ENCODE measurements at regions of chr2 and their contacts with region 1.

Region 1: DNA sequence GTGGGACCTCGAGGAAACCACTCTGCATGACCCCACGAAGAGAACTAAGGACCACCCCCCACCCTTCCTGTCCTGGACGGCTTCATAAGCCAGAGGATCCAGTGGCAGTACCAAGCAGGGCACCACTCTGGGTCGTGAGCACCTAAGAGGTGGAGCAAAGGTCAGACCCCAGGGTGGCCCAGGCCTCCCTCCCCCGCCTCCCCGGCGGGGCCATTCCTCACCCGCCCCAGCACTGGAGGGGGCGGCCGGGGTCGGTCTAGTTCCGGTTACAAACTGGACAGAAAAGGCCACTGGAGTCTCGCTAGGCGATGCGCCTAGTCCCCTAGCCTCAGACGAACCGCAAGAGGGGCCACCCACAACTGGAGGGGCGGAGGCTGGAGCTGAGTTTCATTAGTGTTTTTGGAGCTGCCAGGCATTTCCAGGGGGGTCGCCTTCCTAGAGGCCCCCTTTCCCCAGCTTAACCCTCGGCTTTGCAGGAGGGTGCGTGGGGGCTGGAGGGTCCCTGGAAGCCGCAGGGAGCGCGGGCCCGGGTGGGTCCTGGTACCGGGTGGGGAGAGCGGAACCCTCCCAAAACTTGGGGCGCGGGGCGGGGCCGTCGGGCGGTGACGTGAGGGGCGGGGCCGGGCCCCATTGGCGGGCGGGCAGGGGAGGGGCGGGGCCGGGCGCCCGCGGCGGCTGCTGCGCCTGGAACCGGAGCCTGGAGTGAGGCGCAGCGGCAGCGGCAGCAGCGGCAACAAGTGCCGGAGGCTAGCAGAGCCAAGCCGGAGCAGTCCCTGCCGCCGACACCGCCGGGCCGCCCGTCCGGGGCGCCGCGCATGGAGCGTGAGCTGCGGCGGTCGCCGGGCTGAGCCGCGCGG is at the start of gene B3GNT2:
- DNase-seq: peak; percentile 89
- H3K4me3 ChIP-seq: peak within 1 kb of the TSS; percentile 95
- H3K27ac ChIP-seq: peak within 1 kb of the TSS; percentile 75
- H3K4me1 ChIP-seq: peaks cover 58% of the 10 kb centered on the region
- CTCF ChIP-seq: no peak
- total RNA-seq, gene B3GNT2: 63.0 and 65.8 TPM in 2 replicates

Region 2: DNA sequence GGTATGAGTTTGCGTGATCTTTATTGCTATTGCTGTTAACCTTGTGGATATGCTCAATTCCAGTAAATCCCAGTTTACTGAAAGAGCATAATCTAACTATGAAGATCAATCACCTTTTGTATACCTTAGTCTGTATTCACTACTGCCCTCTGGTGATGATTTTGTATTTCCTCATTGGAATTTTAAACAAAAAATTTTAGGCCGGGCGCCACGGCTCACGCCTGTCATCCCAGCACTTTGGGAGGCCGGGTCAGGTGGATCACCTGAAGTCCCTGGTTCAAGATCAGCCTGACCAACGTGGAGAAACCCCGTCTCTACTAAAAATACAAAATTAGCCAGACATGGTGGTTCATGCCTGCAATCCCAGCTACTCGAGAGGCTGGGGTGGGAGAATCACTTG is 285.0 kb before region 1 on chr2:
- CTCF ChIA-PET with region 1: no interaction called
- POLR2A ChIA-PET with region 1: no interaction called
- intact Hi-C with region 1: loop called (anchors 10 kb)
- DNase-seq: peak; percentile 15
- H3K4me3 ChIP-seq: no peak overlapping the region
- H3K27ac ChIP-seq: no peak overlapping the region
- H3K4me1 ChIP-seq: peaks cover 4% of the 10 kb centered on the region
- CTCF ChIP-seq: peak; percentile 68; the same call in 1 of the 2 replicates

Region 3: DNA sequence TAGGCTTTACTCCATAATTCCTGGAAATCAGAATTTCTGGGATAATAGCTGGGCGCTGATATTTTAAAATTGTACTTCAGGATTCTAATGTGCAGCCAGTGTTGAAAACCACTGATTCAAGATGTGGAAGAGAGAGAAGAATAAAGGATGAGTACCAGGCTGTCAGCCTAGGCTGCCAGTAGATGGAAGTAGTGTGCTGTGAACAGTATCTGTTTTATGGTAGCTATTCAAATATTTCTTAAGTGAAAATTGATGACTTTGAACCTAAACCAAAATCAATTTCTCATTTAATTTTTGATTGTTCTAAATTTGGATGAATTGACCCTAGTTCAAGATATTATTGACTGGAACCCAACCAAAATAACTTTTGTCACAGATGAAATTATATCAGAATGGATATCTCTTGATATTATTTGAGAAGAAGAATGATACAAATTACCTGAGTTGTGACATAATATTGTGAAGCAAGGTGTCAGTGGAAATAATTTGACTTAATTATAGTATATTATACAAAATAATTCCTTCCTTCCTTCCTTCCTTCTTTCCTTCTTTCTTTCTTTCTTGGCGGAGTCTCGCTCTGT is 202.1 kb before region 1 on chr2:
- CTCF ChIA-PET with region 1: interaction called, 3 read pairs
- POLR2A ChIA-PET with region 1: interaction called, 3 read pairs
- intact Hi-C with region 1: loop called (anchors 2 kb)
- DNase-seq: peak; percentile 80
- H3K4me3 ChIP-seq: no peak overlapping the region
- H3K27ac ChIP-seq: no peak overlapping the region
- H3K4me1 ChIP-seq: peaks cover 49% of the 10 kb centered on the region
- CTCF ChIP-seq: peak; percentile 99

Region 4: GRCh38 chr2:62038975-62039771 is 156.5 kb before region 1 on chr2:
- CTCF ChIA-PET with region 1: no interaction called
- POLR2A ChIA-PET with region 1: interaction called, 4 read pairs
- intact Hi-C with region 1: loop called (anchors 5 kb)
- DNase-seq: peak; percentile 94
- H3K4me3 ChIP-seq: peak overlapping the region; percentile 39
- H3K27ac ChIP-seq: peak overlapping the region; percentile 89
- H3K4me1 ChIP-seq: peaks cover 32% of the 10 kb centered on the region
- CTCF ChIP-seq: no peak

Region 5: DNA sequence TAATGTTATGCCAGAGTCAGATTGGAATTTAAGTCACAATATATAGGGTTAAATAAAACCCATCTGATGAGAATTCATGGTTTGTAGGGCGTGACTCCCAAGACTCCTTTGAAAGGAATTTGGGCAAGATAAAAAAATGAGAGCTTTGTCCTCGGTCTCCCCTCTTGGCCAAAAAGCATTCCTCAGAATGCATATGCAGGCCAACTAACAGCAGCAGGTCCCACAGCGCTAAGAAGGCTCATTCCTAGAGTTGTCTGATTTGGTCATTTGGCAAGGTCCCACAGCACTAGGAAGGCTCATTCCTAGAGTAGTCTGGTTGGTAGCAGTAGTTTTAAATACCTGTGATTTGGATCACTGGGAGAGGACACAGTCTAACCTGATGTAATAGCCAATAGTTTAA is 106.0 kb before region 1 on chr2:
- CTCF ChIA-PET with region 1: no interaction called
- POLR2A ChIA-PET with region 1: no interaction called
- intact Hi-C with region 1: no loop called
- DNase-seq: no peak
- H3K4me3 ChIP-seq: no peak overlapping the region
- H3K27ac ChIP-seq: no peak overlapping the region
- H3K4me1 ChIP-seq: peaks cover 5% of the 10 kb centered on the region
- CTCF ChIP-seq: no peak

Region 6: GRCh38 chr2:62140426-62141141 is 55.1 kb before region 1 on chr2:
- CTCF ChIA-PET with region 1: no interaction called
- POLR2A ChIA-PET with region 1: interaction called, 3 read pairs
- intact Hi-C with region 1: loop called (anchors 2 kb)
- DNase-seq: peak; percentile 84
- H3K4me3 ChIP-seq: peak overlapping the region; percentile 13
- H3K27ac ChIP-seq: peak overlapping the region; percentile 89
- H3K4me1 ChIP-seq: peaks cover 90% of the 10 kb centered on the region
- CTCF ChIP-seq: no peak

Region 7: GRCh38 chr2:62410015-62410453 is 214.4 kb after region 1 on chr2:
- CTCF ChIA-PET with region 1: no interaction called
- POLR2A ChIA-PET with region 1: interaction called, 3 read pairs
- intact Hi-C with region 1: loop called (anchors 5 kb)
- DNase-seq: peak; percentile 62
- H3K4me3 ChIP-seq: no peak overlapping the region
- H3K27ac ChIP-seq: no peak overlapping the region
- H3K4me1 ChIP-seq: peaks cover 30% of the 10 kb centered on the region
- CTCF ChIP-seq: peak; percentile 69